Common myeloid progenitor, CD34-positive (primary cell): ENCODE measurements at regions of chr1 and their contacts with region 1.

Region 1: GRCh38 chr1:40691538-40692428 is at the start of gene NFYC:
- DNase-seq: peak; percentile 99 to 100 (median 99)
- H3K4me3 ChIP-seq: peak within 1 kb of the TSS; percentile 61 to 97 (median 85)
- H3K27ac ChIP-seq: peak within 1 kb of the TSS; percentile 95 to 98
- H3K4me1 ChIP-seq: peaks cover 17 to 36% (median 24%) of the 10 kb centered on the region in 4 experiments
- H3K27me3 ChIP-seq: no peaks in the 10 kb centered on the region

Region 2: DNA sequence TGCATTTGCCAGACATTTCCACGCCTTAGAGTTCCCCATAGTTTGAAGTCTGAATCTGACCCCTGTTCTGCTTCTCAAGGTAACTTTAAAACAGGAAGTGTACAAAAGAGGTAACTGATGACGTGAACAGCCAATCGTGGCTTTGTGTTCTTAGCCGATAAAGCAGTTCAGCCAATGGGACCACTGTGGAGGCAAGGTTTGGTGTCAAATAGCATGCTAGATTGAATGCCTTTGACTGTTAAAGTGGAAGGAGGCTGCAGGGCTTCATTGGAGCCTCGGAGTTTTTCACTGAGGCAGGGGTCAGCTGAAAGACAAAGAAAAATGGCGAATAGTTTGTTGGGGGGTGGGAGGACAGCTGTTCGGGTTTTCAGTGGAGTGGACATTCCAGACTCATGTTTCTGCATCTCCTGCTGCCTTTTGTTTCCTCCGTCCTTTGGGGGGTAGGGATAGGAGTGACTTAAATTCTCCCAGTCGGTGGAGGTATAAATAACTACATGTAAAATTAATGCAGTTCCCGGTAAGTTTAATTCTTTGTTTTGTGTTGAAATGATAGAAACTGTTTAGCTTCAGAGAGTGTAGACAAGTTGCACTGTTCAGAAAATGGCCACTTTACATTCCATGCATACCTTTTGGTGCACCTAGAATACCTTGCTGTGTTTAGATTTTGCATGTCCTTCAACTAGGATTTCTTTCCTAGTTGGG is 17.5 kb after region 1 on chr1:
- CTCF ChIA-PET with region 1: interaction called, 4 read pairs
- POLR2A ChIA-PET with region 1: interaction called, 14 read pairs
- DNase-seq: peak; percentile 93 to 97 (median 96)
- H3K4me3 ChIP-seq: peak overlapping the region; percentile 37 to 94 (median 74)
- H3K27ac ChIP-seq: peak overlapping the region; percentile 73 to 88
- H3K4me1 ChIP-seq: peaks cover 35 to 52% (median 47%) of the 10 kb centered on the region in 4 experiments
- H3K27me3 ChIP-seq: no peaks in the 10 kb centered on the region

Region 3: DNA sequence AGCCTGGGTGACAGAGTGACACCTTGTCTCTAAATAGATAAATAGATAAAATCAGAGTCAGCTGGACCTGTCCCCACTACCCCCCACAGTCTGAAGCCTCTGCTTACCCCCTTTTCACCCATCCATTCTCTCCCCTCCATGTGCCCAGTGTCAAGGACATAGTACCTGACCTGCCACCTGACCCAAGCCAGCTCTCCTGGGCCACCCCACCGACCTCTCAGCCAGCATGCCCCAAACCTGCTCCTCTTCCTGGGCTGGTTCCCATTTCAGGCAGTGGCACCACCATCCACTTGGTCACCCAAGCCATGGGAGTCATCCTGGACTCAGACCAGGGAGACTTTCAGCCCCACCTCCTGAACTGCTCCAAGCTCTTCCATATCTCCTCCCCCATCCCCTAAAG is 142.2 kb after region 1 on chr1:
- CTCF ChIA-PET with region 1: no interaction called
- POLR2A ChIA-PET with region 1: no interaction called
- DNase-seq: no peak
- H3K4me3 ChIP-seq: no peak overlapping the region
- H3K27ac ChIP-seq: no peak overlapping the region
- H3K4me1 ChIP-seq: peaks cover 0 to 5% (median 0%) of the 10 kb centered on the region in 4 experiments
- H3K27me3 ChIP-seq: peaks cover 0 to 1% (median 0%) of the 10 kb centered on the region in 5 experiments